H1 (cell line): ENCODE measurements at regions of chr20 and their contacts with region 1.

Region 1: GRCh38 chr20:910870-911770 is 5.0 kb downstream of the ANGPT4 start:
- DNase-seq: no peak
- H3K4me3 ChIP-seq: no peak overlapping the region
- H3K27ac ChIP-seq: no peak overlapping the region
- H3K4me1 ChIP-seq: peaks cover 0 to 6% (median 3%) of the 10 kb centered on the region in 4 experiments; a peak in 4 of 7 replicates
- H3K27me3 ChIP-seq: no peaks in the 10 kb centered on the region
- CTCF ChIP-seq: no peak
- EP300 ChIP-seq: no peak
- POLR2A ChIP-seq: no peak
- RAD21 ChIP-seq: no peak

Region 2: DNA sequence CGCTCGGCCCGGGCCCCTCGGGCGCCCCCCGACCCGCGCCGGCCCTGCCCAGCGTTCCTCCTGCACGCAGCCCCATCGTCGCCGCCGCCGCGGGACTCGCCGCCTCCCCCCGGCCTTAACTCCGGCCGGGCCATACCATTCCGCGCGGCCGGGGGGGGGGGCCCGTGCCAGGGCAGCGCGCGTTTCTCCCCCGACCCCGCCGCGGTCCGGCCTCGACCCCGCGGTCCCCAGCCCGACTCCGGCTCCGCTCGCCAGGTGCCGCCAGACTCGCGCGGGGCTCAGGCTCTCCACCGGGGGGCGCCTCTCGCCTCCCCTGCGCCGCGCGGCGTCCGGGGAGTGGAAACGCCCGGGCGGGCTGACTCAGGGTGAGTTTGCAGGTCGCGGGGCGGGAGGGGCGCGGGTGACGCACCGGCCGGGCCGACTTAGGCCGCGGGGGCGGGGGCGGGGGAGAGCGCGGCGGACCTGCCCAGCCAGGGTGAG is 258.0 kb before region 1 on chr20 and contains the start of gene SRXN1:
- CTCF ChIA-PET with region 1: no interaction called
- POLR2A ChIA-PET with region 1: no interaction called
- DNase-seq: peak; percentile 58 to 90
- H3K4me3 ChIP-seq: peak within 1 kb of the TSS; percentile 37 to 72 (median 68)
- H3K27ac ChIP-seq: no peak within 1 kb of the TSS
- H3K4me1 ChIP-seq: peaks cover 12 to 21% (median 15%) of the 10 kb centered on the region in 4 experiments
- H3K27me3 ChIP-seq: peaks cover 0 to 7% (median 0%) of the 10 kb centered on the region in 4 experiments; a peak in 3 of 7 replicates
- CTCF ChIP-seq: peak; percentile 67 to 99 (median 78)
- EP300 ChIP-seq: peak in 1 of 2 experiments; percentile 75; a peak in 1 of 3 replicates
- POLR2A ChIP-seq: no peak
- RAD21 ChIP-seq: peak; percentile 63 to 82
- total RNA-seq, gene SRXN1: 15.8 and 16.7 TPM in 2 replicates

Region 3: DNA sequence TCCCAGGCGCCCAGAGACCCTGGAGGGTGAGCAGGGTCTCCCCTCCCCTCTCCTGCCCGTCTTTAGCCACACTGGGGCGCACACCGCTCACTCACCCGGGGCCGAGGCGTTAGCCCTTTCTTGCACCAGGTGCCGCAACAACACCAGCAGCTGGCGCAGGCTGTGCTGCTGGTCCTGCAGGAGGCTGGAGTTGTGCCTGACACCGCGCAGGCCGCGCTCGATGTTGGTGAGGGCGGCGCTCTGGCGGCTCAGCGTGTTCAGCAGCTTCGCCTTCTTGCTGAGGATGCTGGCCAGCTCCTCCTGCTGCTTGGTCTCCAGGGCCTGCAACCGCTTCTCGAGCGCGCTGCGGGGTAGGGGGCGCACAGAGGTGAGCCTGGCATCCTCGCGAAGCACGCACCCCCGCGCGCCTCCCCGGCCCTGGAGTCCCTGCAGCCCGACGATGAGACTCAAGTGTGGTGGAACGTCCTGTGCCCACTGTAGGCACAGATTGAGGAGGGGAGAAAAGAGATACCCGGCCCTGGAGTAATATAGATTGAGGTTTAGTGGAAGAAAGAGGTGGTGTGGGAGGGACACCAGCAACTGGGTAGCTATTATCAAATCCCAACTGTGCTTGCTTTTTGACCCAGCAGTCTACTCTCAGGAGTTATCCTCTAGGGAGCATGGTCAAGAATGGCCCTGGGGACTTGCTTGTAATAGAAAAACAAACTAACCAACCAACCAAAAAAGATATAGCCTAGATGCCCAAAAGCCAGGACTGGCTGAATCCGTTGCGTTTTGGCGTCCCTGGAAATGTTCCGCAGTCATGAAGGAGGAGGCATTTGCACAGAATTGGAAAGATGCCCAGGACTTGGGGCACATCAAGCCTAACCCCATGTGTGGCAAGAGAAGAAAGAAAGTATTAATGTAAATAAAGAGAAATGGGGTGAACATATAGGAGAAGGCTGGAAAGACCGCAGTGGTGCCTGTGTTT is 25.9 kb before region 1 on chr20:
- CTCF ChIA-PET with region 1: interaction called, 16 read pairs
- POLR2A ChIA-PET with region 1: no interaction called
- DNase-seq: peak; percentile 82 to 91
- H3K4me3 ChIP-seq: peak overlapping the region in 1 of 4 experiments; percentile 32; a peak in 1 of 8 replicates
- H3K27ac ChIP-seq: no peak overlapping the region
- H3K4me1 ChIP-seq: peaks cover 0 to 6% (median 0%) of the 10 kb centered on the region in 4 experiments; a peak in 3 of 7 replicates
- H3K27me3 ChIP-seq: peaks cover 0 to 5% (median 3%) of the 10 kb centered on the region in 4 experiments; a peak in 6 of 7 replicates
- CTCF ChIP-seq: peak; percentile 74 to 98 (median 78)
- EP300 ChIP-seq: no peak
- POLR2A ChIP-seq: no peak
- RAD21 ChIP-seq: peak; percentile 90 to 93

Region 4: GRCh38 chr20:891058-891705 is 19.9 kb before region 1 on chr20:
- CTCF ChIA-PET with region 1: interaction called, 12 read pairs
- POLR2A ChIA-PET with region 1: interaction called, 3 read pairs
- DNase-seq: no peak
- H3K4me3 ChIP-seq: no peak overlapping the region
- H3K27ac ChIP-seq: no peak overlapping the region
- H3K4me1 ChIP-seq: no peaks in the 10 kb centered on the region
- H3K27me3 ChIP-seq: no peaks in the 10 kb centered on the region; a peak in 1 of 7 replicates
- CTCF ChIP-seq: no peak
- EP300 ChIP-seq: no peak
- POLR2A ChIP-seq: no peak
- RAD21 ChIP-seq: no peak